ENCODE measurements at regions of chrX and their contacts with region 1.

Region 1: DNA sequence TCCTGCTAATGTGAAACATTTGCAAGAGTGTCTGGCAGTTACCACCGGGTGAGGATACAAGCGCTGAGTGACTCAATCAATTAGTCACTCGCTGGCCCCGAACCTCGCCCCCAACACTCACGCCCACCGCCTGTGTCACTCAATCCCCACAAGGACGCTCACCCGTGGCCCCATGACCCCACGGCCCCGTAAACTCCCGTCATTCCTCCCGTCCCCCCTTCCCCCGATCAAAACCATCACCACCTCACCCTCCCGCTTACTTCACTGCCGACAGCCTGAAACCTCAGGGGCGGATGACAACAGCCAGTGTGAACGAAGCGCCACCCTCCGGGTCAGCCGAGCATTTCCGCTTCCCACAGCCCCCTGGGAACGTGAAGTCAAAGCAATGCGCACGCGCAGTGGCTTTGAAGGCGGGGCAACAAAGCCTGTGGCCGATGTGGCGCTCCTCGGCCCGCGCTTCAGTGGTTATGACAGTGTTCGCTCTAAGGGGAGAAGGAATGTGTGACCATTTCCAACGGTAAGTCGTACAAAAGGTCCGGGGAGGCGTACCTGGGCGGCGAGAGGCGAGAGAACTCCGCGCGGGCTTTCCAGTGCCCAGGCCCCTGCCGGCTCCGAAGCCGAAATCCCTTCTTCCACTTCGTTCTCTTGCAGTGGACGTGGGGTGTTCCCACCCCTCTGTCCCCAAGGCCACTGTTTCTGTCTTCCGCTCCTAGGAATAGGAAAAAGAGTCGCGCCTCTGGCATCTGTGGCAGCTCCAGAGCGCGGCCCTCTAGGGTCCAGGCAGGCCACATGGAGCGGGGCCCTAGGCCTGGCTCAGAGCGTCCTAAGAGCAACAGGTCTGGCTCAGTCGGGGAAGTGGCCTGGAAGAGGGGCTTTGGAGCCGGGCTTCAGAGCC is at the start of gene ZNF674:
- DNase-seq: peak; percentile 84 to 93 (median 90)
- ATAC-seq: peak; percentile 97
- H3K4me3 ChIP-seq: peak within 1 kb of the TSS; percentile 81
- H3K4me3 Mint-ChIP-seq: peak within 1 kb of the TSS; percentile 92 to 100 (median 96)
- H3K27ac ChIP-seq: peak within 1 kb of the TSS; percentile 90
- H3K27ac Mint-ChIP-seq: peak within 1 kb of the TSS; percentile 93 to 100 (median 96)
- H3K4me1 ChIP-seq: peaks cover 6 to 18% of the 10 kb centered on the region in 2 donors
- H3K4me1 Mint-ChIP-seq: peaks cover 0 to 29% (median 25%) of the 10 kb centered on the region in 7 donors
- H3K27me3 ChIP-seq: no peaks in the 10 kb centered on the region
- H3K27me3 Mint-ChIP-seq: no peaks in the 10 kb centered on the region
- total RNA-seq, gene ZNF674: 2.1 to 6.9 (median 5.8) TPM

Region 2: DNA sequence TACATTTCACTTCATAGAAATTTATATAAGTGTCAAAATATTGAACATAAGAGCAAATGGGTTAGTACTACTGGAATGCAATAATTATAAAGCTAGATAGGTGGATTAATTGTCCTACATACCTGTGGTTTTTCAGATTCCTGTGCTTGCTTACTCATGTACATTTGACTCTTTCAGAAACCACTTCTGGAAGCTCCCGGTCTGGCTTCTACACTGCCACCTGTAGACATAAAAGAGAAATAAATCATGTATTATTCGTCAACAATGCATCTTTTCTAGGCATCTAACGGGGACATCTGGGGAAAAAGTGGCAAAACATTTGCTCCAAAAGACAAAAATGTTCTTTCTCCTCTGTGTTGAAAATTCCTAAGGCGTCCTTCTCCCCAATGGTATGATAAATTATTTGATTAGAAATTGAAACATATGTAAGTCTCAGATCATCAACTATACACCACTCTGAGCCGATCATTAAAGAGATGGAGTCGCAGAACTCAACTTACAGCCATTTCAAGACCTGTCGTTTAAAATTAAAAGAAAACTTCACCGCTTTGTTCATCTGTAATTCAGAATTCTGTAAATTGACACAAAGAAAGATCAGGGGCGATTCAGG is 696.0 kb before region 1 on chrX:
- CTCF ChIA-PET with region 1: no interaction called
- POLR2A ChIA-PET with region 1: no interaction called
- intact Hi-C with region 1: loop called in 1 of 2 experiments (anchors 1 kb)
- DNase-seq: peak in 6 of 9 donors; percentile 10 to 36 (median 22)
- ATAC-seq: peak; percentile 76
- H3K4me3 ChIP-seq: peak overlapping the region; percentile 77
- H3K4me3 Mint-ChIP-seq: peak overlapping the region; percentile 88 to 95 (median 92)
- H3K27ac ChIP-seq: no peak overlapping the region
- H3K27ac Mint-ChIP-seq: peak overlapping the region in 7 of 9 donors; percentile 16 to 91 (median 69)
- H3K4me1 ChIP-seq: no peaks in the 10 kb centered on the region
- H3K4me1 Mint-ChIP-seq: peaks cover 0 to 45% (median 9%) of the 10 kb centered on the region in 7 donors
- H3K27me3 ChIP-seq: no peaks in the 10 kb centered on the region
- H3K27me3 Mint-ChIP-seq: no peaks in the 10 kb centered on the region

Region 3: DNA sequence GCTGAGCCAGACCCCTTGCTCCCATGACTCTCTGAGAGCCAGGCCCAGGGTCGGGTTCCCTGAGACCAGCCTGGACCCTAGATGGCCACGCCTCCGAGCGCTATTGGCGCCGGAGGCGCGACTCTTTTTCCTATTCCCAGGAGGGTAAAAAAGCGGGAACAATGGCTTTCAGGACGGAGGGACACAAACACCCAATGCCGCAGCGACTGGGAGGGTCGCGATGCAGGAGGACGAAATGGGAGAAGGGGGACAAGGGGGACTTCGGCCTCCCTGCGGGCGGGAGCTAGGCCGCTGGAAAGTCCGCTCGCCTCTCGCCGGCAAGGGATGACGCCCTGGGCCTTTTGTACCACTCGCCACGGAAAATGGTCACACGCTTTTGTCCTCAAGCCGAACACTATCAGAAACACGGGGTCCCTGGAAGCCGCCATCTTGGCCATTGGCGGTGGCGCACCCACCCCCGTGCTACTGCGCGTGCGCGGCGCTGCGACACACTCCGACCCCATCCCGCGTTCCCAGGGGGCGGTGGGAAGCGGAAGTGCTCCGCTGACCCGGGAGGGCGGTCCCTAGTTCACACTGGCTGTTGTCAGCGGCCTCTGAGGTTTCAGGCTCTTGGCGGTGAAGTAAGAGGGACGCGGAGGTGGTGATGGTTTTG is 98.5 kb before region 1 on chrX:
- CTCF ChIA-PET with region 1: no interaction called
- POLR2A ChIA-PET with region 1: no interaction called
- intact Hi-C with region 1: loop called (anchors 1 to 2 kb)
- DNase-seq: peak; percentile 75 to 86 (median 81)
- ATAC-seq: peak; percentile 94
- H3K4me3 ChIP-seq: peak overlapping the region; percentile 83
- H3K4me3 Mint-ChIP-seq: peak overlapping the region; percentile 77 to 91 (median 85)
- H3K27ac ChIP-seq: peak overlapping the region; percentile 86
- H3K27ac Mint-ChIP-seq: peak overlapping the region; percentile 79 to 92 (median 90)
- H3K4me1 ChIP-seq: peaks cover 5 to 7% of the 10 kb centered on the region in 2 donors
- H3K4me1 Mint-ChIP-seq: peaks cover 0 to 29% (median 20%) of the 10 kb centered on the region in 7 donors
- H3K27me3 ChIP-seq: no peaks in the 10 kb centered on the region
- H3K27me3 Mint-ChIP-seq: no peaks in the 10 kb centered on the region

Region 4: GRCh38 chrX:46588263-46588662 is 42.9 kb after region 1 on chrX:
- CTCF ChIA-PET with region 1: no interaction called
- POLR2A ChIA-PET with region 1: no interaction called
- intact Hi-C with region 1: loop called in 1 of 2 experiments (anchors 1 kb)
- DNase-seq: peak in 8 of 9 donors; percentile 30 to 60 (median 48)
- ATAC-seq: peak; percentile 27
- H3K4me3 ChIP-seq: peak overlapping the region; percentile 28
- H3K4me3 Mint-ChIP-seq: peak overlapping the region; percentile 68 to 86 (median 78)
- H3K27ac ChIP-seq: peak overlapping the region; percentile 44
- H3K27ac Mint-ChIP-seq: peak overlapping the region; percentile 69 to 87 (median 85)
- H3K4me1 ChIP-seq: peaks cover 16% of the 10 kb centered on the region in 2 donors
- H3K4me1 Mint-ChIP-seq: peaks cover 7 to 49% (median 32%) of the 10 kb centered on the region in 7 donors
- H3K27me3 ChIP-seq: no peaks in the 10 kb centered on the region
- H3K27me3 Mint-ChIP-seq: no peaks in the 10 kb centered on the region

Region 5: DNA sequence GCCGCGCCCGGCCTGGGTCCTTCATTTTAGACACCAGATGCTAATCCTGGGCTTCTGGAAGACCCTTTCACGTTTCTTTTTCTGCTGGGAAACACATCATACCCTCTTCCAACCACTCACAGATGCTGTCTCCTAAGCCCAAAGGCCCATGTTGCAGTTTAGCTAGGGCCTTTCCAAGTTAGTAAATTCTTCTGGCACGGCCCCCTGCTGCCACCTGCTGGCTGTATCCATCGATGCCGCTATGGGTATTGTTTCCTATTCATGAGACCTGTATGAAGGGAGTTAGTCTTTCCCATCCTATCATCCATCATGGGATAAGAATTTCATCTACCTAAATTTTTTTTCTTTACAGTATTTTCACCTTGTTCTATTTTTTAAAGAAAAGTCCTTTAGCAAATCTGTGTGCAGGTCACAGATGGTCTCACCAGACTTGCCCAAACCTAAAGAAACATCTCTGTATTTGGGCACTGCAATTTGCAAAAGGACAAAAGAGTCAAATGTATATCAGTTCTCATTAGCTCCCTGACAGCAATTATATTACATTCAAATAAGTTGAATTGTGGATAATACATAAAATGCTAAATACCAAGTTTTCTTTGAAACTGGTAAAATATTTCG is 251.3 kb after region 1 on chrX:
- CTCF ChIA-PET with region 1: no interaction called
- POLR2A ChIA-PET with region 1: no interaction called
- intact Hi-C with region 1: loop called in 1 of 2 experiments (anchors 5 kb)
- DNase-seq: peak; percentile 25 to 67 (median 52)
- ATAC-seq: peak; percentile 76
- H3K4me3 ChIP-seq: no peak overlapping the region
- H3K4me3 Mint-ChIP-seq: no peak overlapping the region
- H3K27ac ChIP-seq: no peak overlapping the region
- H3K27ac Mint-ChIP-seq: no peak overlapping the region
- H3K4me1 ChIP-seq: no peaks in the 10 kb centered on the region
- H3K4me1 Mint-ChIP-seq: peaks cover 0 to 19% (median 6%) of the 10 kb centered on the region in 7 donors
- H3K27me3 ChIP-seq: no peaks in the 10 kb centered on the region
- H3K27me3 Mint-ChIP-seq: peaks cover 0 to 6% (median 0%) of the 10 kb centered on the region in 5 donors

Region 6: GRCh38 chrX:46991664-46992063 is 446.3 kb after region 1 on chrX:
- CTCF ChIA-PET with region 1: no interaction called
- POLR2A ChIA-PET with region 1: no interaction called
- intact Hi-C with region 1: no loop called
- DNase-seq: no peak
- ATAC-seq: no peak
- H3K4me3 ChIP-seq: no peak overlapping the region
- H3K4me3 Mint-ChIP-seq: no peak overlapping the region
- H3K27ac ChIP-seq: no peak overlapping the region
- H3K27ac Mint-ChIP-seq: no peak overlapping the region
- H3K4me1 ChIP-seq: no peaks in the 10 kb centered on the region
- H3K4me1 Mint-ChIP-seq: no peaks in the 10 kb centered on the region
- H3K27me3 ChIP-seq: no peaks in the 10 kb centered on the region
- H3K27me3 Mint-ChIP-seq: no peaks in the 10 kb centered on the region

Region 7: GRCh38 chrX:47144626-47145394 is 599.5 kb after region 1 on chrX and contains the starts of genes NDUFB11 and RBM10:
- CTCF ChIA-PET with region 1: no interaction called
- POLR2A ChIA-PET with region 1: no interaction called
- intact Hi-C with region 1: loop called (anchors 10 kb)
- DNase-seq: peak; percentile 64 to 90 (median 87)
- ATAC-seq: peak; percentile 95
- H3K4me3 ChIP-seq: peak within 1 kb of the TSS; percentile 77
- H3K4me3 Mint-ChIP-seq: peak within 1 kb of the TSS; percentile 92 to 99 (median 96)
- H3K27ac ChIP-seq: peak within 1 kb of the TSS; percentile 94
- H3K27ac Mint-ChIP-seq: peak within 1 kb of the TSS; percentile 93 to 99 (median 96)
- H3K4me1 ChIP-seq: peaks cover 6 to 12% of the 10 kb centered on the region in 2 donors
- H3K4me1 Mint-ChIP-seq: peaks cover 6 to 42% (median 26%) of the 10 kb centered on the region in 7 donors
- H3K27me3 ChIP-seq: no peaks in the 10 kb centered on the region
- H3K27me3 Mint-ChIP-seq: no peaks in the 10 kb centered on the region
- total RNA-seq, gene NDUFB11: 51.3 to 92.5 (median 55.2) TPM
- total RNA-seq, gene RBM10: 31.8 to 55.6 (median 47.6) TPM